Mammary epithelial cell (primary cell): ENCODE measurements at regions of chr1 and their contacts with region 1.

Region 1: DNA sequence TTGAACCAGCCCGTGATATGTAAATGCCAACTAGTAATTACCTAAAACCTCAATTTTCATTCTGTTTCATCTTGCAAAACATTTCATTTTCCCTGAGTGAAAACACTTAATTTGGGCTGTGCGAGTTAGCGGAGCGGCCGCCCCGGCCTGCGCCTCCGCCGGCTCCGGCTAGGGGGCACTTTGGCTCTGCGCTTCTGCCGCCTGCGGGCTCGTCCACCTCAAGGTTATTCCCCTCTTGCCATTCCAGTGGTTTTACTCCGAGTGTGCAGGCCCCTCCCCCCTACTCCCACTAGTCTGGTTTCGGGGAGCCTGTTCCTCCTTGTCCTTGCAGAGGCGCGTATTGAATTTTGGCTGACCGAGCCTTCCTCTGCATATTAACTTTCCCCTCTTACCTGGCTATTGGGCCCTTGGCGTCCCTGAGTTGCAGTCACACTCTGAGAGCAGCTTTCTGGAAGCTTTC is 55.6 kb downstream of the PEX14 start:
- DNase-seq: peak; percentile 73
- H3K4me3 ChIP-seq: peak overlapping the region; percentile 3 to 20 (median 6)
- H3K27ac ChIP-seq: peak overlapping the region; percentile 80
- H3K4me1 ChIP-seq: peaks cover 46% of the 10 kb centered on the region
- H3K27me3 ChIP-seq: no peaks in the 10 kb centered on the region
- CTCF ChIP-seq: peak; percentile 80 to 95

Region 2: GRCh38 chr1:10494754-10495474 is 35.4 kb before region 1 on chr1:
- CTCF ChIA-PET with region 1: interaction called, 3 read pairs
- dilution Hi-C with region 1: loop called (anchors 5 kb)
- in situ Hi-C with region 1: no loop called
- intact Hi-C with region 1: no loop called
- DNase-seq: peak; percentile 74
- H3K4me3 ChIP-seq: peak overlapping the region in 1 of 3 experiments; percentile 19
- H3K27ac ChIP-seq: peak overlapping the region; percentile 96
- H3K4me1 ChIP-seq: peaks cover 27% of the 10 kb centered on the region
- H3K27me3 ChIP-seq: no peaks in the 10 kb centered on the region
- CTCF ChIP-seq: peak; percentile 78 to 93

Region 3: GRCh38 chr1:10561955-10562354 is 31.6 kb after region 1 on chr1:
- CTCF ChIA-PET with region 1: interaction called, 19 read pairs
- dilution Hi-C with region 1: no loop called
- in situ Hi-C with region 1: no loop called
- intact Hi-C with region 1: no loop called
- DNase-seq: peak; percentile 5
- H3K4me3 ChIP-seq: no peak overlapping the region
- H3K27ac ChIP-seq: peak overlapping the region; percentile 67
- H3K4me1 ChIP-seq: peaks cover 5% of the 10 kb centered on the region
- H3K27me3 ChIP-seq: no peaks in the 10 kb centered on the region
- CTCF ChIP-seq: peak; percentile 22 to 44

Region 4: DNA sequence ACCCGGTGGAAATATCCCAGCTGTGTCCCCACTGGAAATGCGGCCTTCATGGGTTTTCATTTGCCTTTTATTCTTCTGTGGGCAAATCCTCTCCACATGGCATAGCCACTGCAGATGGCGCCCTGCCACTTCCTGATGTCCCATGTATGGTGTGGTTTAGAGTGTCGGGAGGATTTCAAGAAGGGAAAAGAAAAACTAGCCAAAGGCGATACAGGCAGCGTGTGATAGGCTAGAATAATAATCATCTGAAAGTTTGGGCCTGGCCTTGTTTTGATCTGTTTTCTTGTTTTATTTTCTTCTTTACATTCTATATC is 68.0 kb after region 1 on chr1:
- CTCF ChIA-PET with region 1: no interaction called
- dilution Hi-C with region 1: no loop called
- in situ Hi-C with region 1: no loop called
- intact Hi-C with region 1: loop called (anchors 2 kb)
- DNase-seq: no peak
- H3K4me3 ChIP-seq: no peak overlapping the region
- H3K27ac ChIP-seq: peak overlapping the region; percentile 84
- H3K4me1 ChIP-seq: peaks cover 16% of the 10 kb centered on the region
- H3K27me3 ChIP-seq: no peaks in the 10 kb centered on the region
- CTCF ChIP-seq: no peak

Region 5: DNA sequence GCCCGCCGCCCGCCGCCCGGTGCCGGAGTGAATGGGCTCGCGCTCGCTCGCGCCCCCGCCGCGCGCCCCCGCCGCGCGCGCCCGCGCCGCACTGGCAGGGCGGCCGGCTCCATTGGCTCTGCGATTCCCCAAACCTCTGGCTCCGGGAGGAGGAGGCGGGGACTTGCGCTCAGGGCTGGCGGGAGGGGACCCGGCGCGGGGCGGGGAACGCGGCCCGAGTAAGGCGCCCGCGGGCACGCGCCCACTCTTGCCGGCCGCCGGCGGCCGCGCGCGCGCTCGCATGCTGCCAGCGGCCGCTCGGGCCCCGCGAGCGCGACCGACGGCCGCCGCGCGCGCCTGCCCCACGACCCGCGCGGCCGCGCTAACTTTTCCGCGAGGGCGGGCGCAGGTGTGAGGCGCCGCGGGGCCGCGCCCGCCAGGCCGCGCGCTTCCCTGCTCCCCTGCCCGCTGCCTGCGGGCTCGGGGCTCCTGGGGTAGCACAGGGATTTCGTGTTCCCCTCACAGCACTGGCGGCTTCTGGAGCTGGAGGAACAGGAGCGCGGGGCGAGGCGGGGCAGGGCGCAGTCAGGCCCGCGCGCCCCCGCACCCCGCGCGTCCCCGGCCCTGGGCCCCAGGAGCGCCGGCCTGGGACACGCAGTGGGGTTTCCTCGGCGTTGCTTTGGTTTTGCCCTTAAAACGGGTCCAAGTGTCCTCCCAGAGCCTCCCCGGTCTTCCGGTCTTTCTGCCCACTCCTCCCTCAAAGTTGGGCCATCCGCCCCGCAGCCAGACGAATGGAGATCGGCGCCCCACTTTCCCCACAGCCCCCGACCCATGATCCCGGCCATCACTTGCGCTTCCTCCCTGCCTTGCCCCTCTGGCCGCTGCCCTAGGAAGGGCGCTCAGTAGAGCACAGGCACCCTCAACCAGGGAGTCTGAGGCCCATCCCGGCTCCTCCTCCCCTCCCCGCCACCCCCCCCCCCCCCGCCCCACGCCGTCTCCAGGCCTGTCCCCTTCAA is 164.6 kb after region 1 on chr1:
- CTCF ChIA-PET with region 1: no interaction called
- dilution Hi-C with region 1: no loop called
- in situ Hi-C with region 1: no loop called
- intact Hi-C with region 1: loop called (anchors 2 kb)
- DNase-seq: peak; percentile 78
- H3K4me3 ChIP-seq: peak overlapping the region in 2 of 3 experiments; percentile 42 to 53
- H3K27ac ChIP-seq: no peak overlapping the region
- H3K4me1 ChIP-seq: peaks cover 16% of the 10 kb centered on the region
- H3K27me3 ChIP-seq: no peaks in the 10 kb centered on the region
- CTCF ChIP-seq: no peak

Region 6: DNA sequence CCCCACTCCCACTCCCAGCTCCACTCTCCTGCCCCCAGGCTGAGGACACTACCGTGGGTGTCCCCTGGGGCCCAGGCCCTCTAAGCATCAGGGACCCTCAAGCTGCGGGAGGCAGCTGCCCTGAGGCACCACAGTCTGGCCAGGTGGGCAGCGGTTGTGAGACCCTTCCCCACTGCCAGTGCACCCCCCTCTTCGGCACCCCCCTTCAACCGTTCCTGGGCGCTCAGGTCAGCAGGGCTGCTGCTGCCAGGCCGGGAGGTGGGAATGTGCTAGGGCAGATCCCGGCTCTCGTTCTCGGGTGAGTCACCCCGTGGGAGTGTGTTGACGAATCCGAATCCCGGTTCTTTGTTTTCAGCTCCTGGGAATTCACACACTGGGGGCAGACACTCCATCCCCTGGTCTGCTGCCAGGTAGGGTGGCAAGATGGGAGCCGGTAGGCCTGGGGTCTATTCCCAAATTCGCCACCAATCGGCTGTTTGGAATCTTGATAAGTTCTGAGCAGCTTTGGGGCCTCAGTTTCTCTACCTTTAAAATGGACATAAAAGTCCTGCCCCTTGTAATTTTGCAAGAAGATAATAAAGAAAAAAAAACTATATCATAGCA is 294.6 kb after region 1 on chr1:
- CTCF ChIA-PET with region 1: no interaction called
- dilution Hi-C with region 1: no loop called
- in situ Hi-C with region 1: no loop called
- intact Hi-C with region 1: no loop called
- DNase-seq: peak; percentile 96
- H3K4me3 ChIP-seq: peak overlapping the region; percentile 13 to 52 (median 15)
- H3K27ac ChIP-seq: peak overlapping the region; percentile 88
- H3K4me1 ChIP-seq: peaks cover 25% of the 10 kb centered on the region
- H3K27me3 ChIP-seq: no peaks in the 10 kb centered on the region
- CTCF ChIP-seq: no peak

Region 7: GRCh38 chr1:10901086-10901890 is 371.0 kb after region 1 on chr1:
- CTCF ChIA-PET with region 1: interaction called, 5 read pairs
- dilution Hi-C with region 1: no loop called
- in situ Hi-C with region 1: no loop called
- intact Hi-C with region 1: loop called (anchors 2 kb)
- DNase-seq: peak; percentile 64
- H3K4me3 ChIP-seq: peak overlapping the region in 2 of 3 experiments; percentile 30 to 35
- H3K27ac ChIP-seq: peak overlapping the region; percentile 82
- H3K4me1 ChIP-seq: peaks cover 46% of the 10 kb centered on the region
- H3K27me3 ChIP-seq: no peaks in the 10 kb centered on the region
- CTCF ChIP-seq: no peak